Activated CD4-positive, alpha-beta T cell treated with anti-CD3 and anti-CD28 coated beads for 36 hours (primary cell): ENCODE measurements at regions of chr5 and their contacts with region 1.

Region 1: DNA sequence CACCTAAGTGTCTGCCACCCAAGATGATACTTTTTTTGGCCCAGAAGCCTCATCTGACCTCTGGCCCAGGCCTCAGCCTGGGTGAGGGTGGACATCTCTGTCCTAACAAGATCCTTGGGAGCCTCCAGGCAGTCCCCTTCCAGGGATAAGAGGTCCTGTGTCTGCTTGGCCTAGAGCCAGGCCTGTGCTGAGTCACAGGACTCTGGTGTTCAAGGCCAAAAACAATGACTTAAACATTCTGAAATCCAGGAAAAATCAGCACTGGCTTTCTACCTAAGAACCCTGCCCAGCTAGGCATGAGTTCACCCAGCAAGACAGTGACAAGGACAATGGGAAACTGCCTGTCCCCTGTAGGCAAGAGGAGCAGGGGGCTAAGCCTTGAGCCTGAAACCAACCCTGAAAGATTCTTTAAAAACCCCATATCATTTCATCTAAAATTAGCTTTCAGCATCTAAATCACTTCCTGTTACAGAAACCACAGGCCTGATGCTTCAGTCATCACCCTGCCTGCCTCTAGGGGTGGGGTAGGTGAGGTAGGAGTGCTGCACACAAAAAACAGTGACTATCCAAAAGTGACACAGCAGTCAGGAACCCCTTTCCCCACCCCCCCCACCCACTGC is 29.9 kb downstream of the CSF2 start:
- DNase-seq: peak; percentile 82
- ATAC-seq: peak; percentile 57
- H3K4me3 Mint-ChIP-seq: peak overlapping the region; percentile 64
- H3K27ac Mint-ChIP-seq: peak overlapping the region; percentile 98
- H3K4me1 Mint-ChIP-seq: peaks cover 73% of the 10 kb centered on the region
- H3K27me3 Mint-ChIP-seq: no peaks in the 10 kb centered on the region

Region 2: GRCh38 chr5:131541762-131542161 is 561.7 kb before region 1 on chr5:
- CTCF ChIA-PET with region 1: no interaction called
- POLR2A ChIA-PET with region 1: no interaction called
- intact Hi-C with region 1: loop called (anchors 5 kb)
- DNase-seq: no peak
- ATAC-seq: peak; percentile 76
- H3K4me3 Mint-ChIP-seq: no peak overlapping the region
- H3K27ac Mint-ChIP-seq: peak overlapping the region; percentile 85
- H3K4me1 Mint-ChIP-seq: peaks cover 84% of the 10 kb centered on the region
- H3K27me3 Mint-ChIP-seq: no peaks in the 10 kb centered on the region

Region 3: GRCh38 chr5:132019857-132020555 is 83.4 kb before region 1 on chr5:
- CTCF ChIA-PET with region 1: interaction called, 3 read pairs
- POLR2A ChIA-PET with region 1: interaction called, 3 read pairs
- intact Hi-C with region 1: loop called (anchors 1 kb)
- DNase-seq: peak; percentile 89
- ATAC-seq: peak; percentile 90
- H3K4me3 Mint-ChIP-seq: peak overlapping the region; percentile 35
- H3K27ac Mint-ChIP-seq: peak overlapping the region; percentile 91
- H3K4me1 Mint-ChIP-seq: peaks cover 41% of the 10 kb centered on the region
- H3K27me3 Mint-ChIP-seq: peaks cover 36% of the 10 kb centered on the region

Region 4: GRCh38 chr5:132114150-132115121 is 11.0 kb after region 1 on chr5:
- CTCF ChIA-PET with region 1: no interaction called
- POLR2A ChIA-PET with region 1: no interaction called
- intact Hi-C with region 1: loop called (anchors 1 to 2 kb)
- DNase-seq: no peak
- ATAC-seq: peak; percentile 78
- H3K4me3 Mint-ChIP-seq: no peak overlapping the region
- H3K27ac Mint-ChIP-seq: peak overlapping the region; percentile 2
- H3K4me1 Mint-ChIP-seq: peaks cover 60% of the 10 kb centered on the region
- H3K27me3 Mint-ChIP-seq: no peaks in the 10 kb centered on the region

Region 5: GRCh38 chr5:132293066-132293991 is 189.9 kb after region 1 on chr5:
- CTCF ChIA-PET with region 1: no interaction called
- POLR2A ChIA-PET with region 1: interaction called, 6 read pairs
- intact Hi-C with region 1: loop called (anchors 1 to 5 kb)
- DNase-seq: peak; percentile 89
- ATAC-seq: peak; percentile 45
- H3K4me3 Mint-ChIP-seq: peak overlapping the region; percentile 88
- H3K27ac Mint-ChIP-seq: peak overlapping the region; percentile 94
- H3K4me1 Mint-ChIP-seq: peaks cover 22% of the 10 kb centered on the region
- H3K27me3 Mint-ChIP-seq: peaks cover 10% of the 10 kb centered on the region

Region 6: DNA sequence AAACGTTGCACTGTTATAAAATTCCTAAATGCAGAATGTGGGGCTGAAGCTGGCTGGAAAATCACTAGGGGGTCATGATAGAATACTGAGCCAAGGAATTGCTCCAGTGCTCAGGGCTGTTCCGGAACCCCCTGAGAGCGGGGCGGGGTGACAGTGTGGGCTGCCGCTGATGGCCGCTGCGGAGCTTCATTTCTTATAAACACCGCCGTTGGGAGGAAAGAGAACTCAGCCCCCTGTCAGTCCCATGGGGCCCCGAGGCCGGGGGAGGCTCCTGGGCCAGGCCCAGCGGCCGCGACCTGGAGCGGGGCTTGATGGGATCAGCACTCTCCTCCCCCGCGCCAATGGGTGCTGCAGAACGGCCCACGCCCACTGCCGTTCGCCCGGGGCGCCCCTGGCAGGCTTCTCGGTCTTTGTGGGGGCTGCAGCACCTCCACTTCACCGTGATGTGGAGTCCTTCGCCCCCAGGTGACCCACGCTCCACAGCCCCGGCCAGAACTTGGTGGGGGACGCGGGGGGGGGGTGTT is 392.3 kb after region 1 on chr5:
- CTCF ChIA-PET with region 1: no interaction called
- POLR2A ChIA-PET with region 1: interaction called, 7 read pairs
- intact Hi-C with region 1: loop called (anchors 2 kb)
- DNase-seq: peak; percentile 92
- ATAC-seq: peak; percentile 49
- H3K4me3 Mint-ChIP-seq: peak overlapping the region; percentile 87
- H3K27ac Mint-ChIP-seq: peak overlapping the region; percentile 95
- H3K4me1 Mint-ChIP-seq: peaks cover 61% of the 10 kb centered on the region
- H3K27me3 Mint-ChIP-seq: no peaks in the 10 kb centered on the region